Astrocyte of the cerebellum (primary cell): ENCODE measurements at regions of chr4 and their contacts with region 1.

Region 1: GRCh38 chr4:184745831-184746795 is 12.2 kb upstream of the CENPU start:
- DNase-seq: peak; percentile 81
- H3K4me3 ChIP-seq: no peak overlapping the region
- CTCF ChIP-seq: peak; percentile 82

Region 2: DNA sequence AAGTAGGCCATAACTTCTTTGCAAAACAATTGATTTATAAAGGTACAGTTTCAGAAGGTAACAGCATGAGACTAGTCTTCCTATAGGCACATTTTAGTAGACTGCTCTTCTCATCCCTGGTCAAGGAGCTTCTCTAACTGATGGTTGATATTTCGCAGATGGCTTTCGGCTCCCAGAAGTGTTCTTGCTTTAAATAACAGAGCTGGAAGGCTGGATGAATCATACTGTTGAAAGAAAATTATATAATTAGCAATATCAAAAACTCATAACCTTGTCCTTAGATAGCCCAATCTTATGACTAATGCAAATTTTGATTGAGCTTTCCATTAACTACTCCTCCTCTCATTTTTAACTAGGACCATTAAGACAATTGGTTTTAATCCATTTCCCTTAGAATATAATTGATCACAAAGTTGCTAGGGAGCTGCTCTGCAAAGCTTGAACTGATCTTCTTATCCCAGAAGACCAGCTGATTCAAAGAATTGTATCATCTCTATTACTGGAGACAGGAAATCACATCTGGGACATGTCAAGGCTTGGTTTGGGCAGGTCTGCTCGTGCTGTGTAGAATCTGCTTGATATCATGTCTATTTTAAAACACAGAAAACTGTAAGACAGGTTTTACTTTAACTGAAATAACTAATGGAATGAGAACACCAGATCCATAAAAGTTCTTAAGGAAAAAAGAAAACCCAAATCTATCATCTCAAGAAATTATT is 50.8 kb before region 1 on chr4:
- in situ Hi-C with region 1: loop called (anchors 5 kb)
- DNase-seq: no peak
- H3K4me3 ChIP-seq: no peak overlapping the region
- CTCF ChIP-seq: no peak

Region 3: GRCh38 chr4:184805462-184806228 is 59.5 kb after region 1 on chr4:
- in situ Hi-C with region 1: loop called (anchors 5 kb)
- DNase-seq: no peak
- H3K4me3 ChIP-seq: no peak overlapping the region
- CTCF ChIP-seq: no peak